Calu3 (cell line): ENCODE measurements at regions of chr7 and their contacts with region 1.

Region 1: DNA sequence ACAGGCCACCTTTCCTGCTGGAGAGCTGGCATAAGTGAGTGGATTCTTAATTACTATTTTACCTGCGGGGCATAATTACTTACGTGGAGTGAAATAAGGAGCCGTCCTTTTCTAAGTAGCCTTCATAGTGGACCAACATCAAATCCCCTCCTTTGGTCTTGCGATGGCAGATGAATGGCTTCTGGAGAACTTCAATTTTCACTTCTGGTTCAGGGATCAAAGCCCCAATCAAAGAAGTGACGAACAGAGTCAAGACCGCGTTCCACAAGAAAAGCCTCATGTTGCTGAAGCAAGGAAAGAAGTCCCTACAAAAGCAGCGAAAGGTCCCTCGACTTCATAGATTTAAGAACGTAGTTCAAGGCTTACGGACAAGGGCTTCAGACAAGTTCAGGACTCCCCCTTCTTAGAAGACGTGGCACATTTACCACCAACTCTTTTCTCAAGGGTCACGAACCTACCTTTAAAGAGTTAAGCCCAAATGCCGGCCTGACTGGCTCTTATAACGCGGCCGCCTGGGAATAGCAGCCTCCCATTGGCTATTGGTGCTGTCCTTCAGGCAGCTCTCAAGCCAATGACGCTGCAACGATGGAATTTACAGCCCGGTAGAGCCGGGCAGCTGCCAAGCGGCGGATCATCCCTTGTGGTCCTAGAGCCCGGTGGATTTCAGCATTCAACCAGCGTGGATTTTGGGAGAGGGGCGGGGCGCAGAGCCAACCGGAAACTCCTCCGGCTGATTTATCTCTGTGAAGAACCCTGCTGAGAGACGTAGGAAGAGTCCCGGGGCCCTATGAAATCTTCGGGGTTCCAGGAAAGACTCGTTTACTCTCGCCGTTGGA is at the start of gene FKBP14:
- DNase-seq: peak; percentile 99
- H3K4me3 Mint-ChIP-seq: no peak within 1 kb of the TSS
- H3K27ac Mint-ChIP-seq: peak within 1 kb of the TSS; percentile 67
- H3K4me1 Mint-ChIP-seq: peaks cover 30% of the 10 kb centered on the region
- H3K27me3 Mint-ChIP-seq: no peaks in the 10 kb centered on the region
- CTCF ChIP-seq: no peak
- total RNA-seq, gene FKBP14: 26.2 and 30.5 TPM in 2 replicates

Region 2: GRCh38 chr7:29946428-29947186 is 79.8 kb before region 1 on chr7:
- CTCF ChIA-PET with region 1: no interaction called
- intact Hi-C with region 1: loop called (anchors 5 kb)
- DNase-seq: peak; percentile 55
- H3K4me3 Mint-ChIP-seq: no peak overlapping the region
- H3K27ac Mint-ChIP-seq: no peak overlapping the region
- H3K4me1 Mint-ChIP-seq: peaks cover 10% of the 10 kb centered on the region
- H3K27me3 Mint-ChIP-seq: no peaks in the 10 kb centered on the region
- CTCF ChIP-seq: peak; percentile 23

Region 3: DNA sequence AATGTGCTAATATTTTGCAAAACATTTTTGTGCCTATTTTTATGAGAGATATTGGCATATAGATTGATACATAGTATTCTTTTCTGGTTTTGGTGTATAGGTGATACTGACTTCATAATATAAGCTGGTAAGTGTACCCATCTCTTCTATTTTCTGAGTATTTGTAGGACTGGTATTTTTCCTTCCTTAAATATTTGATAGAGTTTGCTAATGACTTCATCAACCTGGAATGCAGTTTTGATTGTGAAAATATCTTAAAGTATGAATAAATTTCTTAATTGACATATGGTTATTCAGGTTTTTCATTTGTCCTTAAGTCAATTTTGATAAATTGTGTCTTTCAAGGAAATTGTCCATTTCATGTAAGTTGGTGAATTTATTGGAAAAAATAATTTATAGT is 30.8 kb before region 1 on chr7:
- CTCF ChIA-PET with region 1: no interaction called
- intact Hi-C with region 1: loop called (anchors 2 kb)
- DNase-seq: no peak
- H3K4me3 Mint-ChIP-seq: no peak overlapping the region
- H3K27ac Mint-ChIP-seq: no peak overlapping the region
- H3K4me1 Mint-ChIP-seq: peaks cover 28% of the 10 kb centered on the region
- H3K27me3 Mint-ChIP-seq: no peaks in the 10 kb centered on the region
- CTCF ChIP-seq: no peak

Region 4: DNA sequence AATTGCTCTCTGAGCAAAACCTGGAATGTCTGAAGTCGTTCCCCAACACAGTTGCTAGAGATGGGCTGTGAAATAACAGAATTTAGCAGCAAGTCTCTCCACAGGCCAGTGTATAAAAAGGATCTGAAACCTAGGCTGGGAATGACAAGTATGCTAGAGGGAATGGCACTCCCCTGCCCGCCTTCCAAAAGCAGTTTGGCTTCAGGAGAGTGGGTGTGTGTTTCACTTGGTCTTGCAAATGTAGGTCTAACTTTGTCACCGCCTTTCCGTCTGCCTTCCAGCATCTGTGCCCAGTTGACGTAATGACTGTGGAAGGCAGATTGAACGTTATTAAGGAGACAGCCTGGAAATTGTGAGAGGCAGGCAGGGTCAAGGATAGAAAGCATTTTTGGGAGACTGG is 90.3 kb after region 1 on chr7:
- CTCF ChIA-PET with region 1: no interaction called
- intact Hi-C with region 1: no loop called
- DNase-seq: no peak
- H3K4me3 Mint-ChIP-seq: no peak overlapping the region
- H3K27ac Mint-ChIP-seq: no peak overlapping the region
- H3K4me1 Mint-ChIP-seq: no peaks in the 10 kb centered on the region
- H3K27me3 Mint-ChIP-seq: no peaks in the 10 kb centered on the region
- CTCF ChIP-seq: no peak

Region 5: DNA sequence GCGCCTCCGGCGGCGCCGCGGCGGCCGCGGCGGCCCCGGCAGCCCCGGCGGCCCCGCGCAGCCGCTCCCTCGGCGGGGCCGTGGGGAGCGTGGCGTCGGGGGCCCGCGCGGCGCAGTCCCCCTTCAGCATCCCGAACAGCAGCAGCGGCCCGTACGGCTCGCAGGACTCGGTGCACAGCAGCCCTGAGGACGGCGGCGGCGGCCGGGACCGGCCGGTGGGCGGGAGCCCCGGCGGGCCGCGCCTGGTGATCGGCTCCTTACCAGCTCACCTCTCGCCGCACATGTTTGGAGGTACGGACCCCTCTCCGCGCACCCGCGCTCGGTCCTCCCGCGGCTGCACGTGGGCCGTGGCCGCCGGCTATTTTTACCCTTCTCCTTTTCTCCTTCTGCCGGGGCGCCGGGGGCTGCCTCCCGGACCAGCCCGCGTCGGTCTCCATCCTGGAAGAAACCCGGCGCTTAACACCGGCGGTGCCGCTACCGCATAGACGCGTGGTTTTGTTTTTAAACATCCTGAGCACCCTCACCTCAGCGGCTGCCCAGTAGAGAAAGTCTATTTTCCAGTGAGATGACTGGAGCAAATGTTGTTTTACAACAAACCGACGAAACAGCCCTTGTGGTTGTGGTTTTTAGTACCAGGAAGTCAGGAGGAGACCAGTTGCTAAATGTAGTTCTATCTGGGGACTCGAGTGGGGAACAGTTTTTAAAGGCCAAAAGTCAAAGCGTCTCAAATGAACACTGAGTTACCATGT is 259.3 kb after region 1 on chr7:
- CTCF ChIA-PET with region 1: no interaction called
- intact Hi-C with region 1: no loop called
- DNase-seq: peak; percentile 46
- H3K4me3 Mint-ChIP-seq: peak overlapping the region; percentile 86
- H3K27ac Mint-ChIP-seq: peak overlapping the region; percentile 82
- H3K4me1 Mint-ChIP-seq: peaks cover 37% of the 10 kb centered on the region
- H3K27me3 Mint-ChIP-seq: no peaks in the 10 kb centered on the region
- CTCF ChIP-seq: no peak

Region 6: GRCh38 chr7:30322271-30323005 is 296.0 kb after region 1 on chr7:
- CTCF ChIA-PET with region 1: no interaction called
- intact Hi-C with region 1: no loop called
- DNase-seq: no peak
- H3K4me3 Mint-ChIP-seq: peak overlapping the region; percentile 64
- H3K27ac Mint-ChIP-seq: peak overlapping the region; percentile 64
- H3K4me1 Mint-ChIP-seq: peaks cover 52% of the 10 kb centered on the region
- H3K27me3 Mint-ChIP-seq: no peaks in the 10 kb centered on the region
- CTCF ChIP-seq: no peak